ENCODE measurements at regions of chr15 and their contacts with region 1.

Region 1: GRCh38 chr15:78241007-78241406 is 6.6 kb upstream of the ACSBG1 start:
- DNase-seq: peak; percentile 75 to 87
- ATAC-seq: peak; percentile 83 to 97 (median 95)
- H3K4me3 ChIP-seq: no peak overlapping the region
- H3K4me3 Mint-ChIP-seq: no peak overlapping the region
- H3K27ac ChIP-seq: no peak overlapping the region
- H3K27ac Mint-ChIP-seq: no peak overlapping the region
- H3K4me1 ChIP-seq: no peaks in the 10 kb centered on the region
- H3K4me1 Mint-ChIP-seq: no peaks in the 10 kb centered on the region
- H3K27me3 ChIP-seq: no peaks in the 10 kb centered on the region
- H3K27me3 Mint-ChIP-seq: no peaks in the 10 kb centered on the region
- CTCF ChIP-seq: peak; percentile 80

Region 2: DNA sequence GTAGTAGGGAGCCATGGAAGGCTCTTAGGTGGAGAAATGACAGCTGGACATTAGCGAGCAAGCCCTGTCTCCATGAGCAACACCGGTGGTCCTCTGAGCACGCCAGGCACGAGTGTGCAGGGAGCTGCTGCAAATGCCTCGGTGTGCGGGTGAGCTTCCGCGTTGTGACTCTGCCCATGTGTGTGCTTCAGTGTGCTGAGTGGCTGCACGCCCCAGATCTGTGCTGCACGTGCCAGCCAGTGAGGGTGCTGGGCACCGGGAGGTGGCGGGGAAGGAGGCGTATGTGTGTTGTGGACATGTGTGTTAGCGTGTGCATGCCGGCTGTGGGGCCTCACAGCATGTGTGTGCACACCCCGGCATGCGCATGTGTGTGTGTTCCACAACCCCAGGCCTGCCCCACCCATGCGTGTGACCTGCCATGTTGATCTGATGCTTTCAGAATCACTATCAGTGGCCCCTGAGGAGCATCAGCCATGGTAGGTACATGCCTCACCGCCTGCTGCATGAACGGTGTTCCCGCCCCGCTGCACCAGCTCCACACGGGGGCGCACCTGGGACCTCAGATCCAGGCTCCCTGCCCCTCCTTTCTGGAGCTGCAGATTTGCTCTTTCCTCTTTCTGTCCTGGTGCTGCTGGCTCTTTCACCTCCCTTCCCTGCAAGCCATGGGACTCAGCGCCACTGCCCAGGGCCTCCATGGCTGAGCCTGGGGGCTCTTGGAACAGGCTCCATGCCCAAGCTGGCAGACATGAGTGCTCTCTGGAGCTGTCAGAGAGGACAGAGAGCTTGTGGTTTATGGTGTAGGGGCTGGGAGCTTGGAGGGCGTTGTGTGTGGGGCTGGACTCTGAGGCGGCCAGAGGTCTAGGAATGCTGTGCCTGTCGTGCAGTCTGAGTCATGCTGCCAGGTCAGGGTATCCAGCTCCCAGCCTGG is 332.9 kb before region 1 on chr15:
- intact Hi-C with region 1: loop called (anchors 1 kb)
- DNase-seq: peak in 1 of 2 donors; percentile 56
- ATAC-seq: peak in 1 of 3 donors; percentile 39
- H3K4me3 ChIP-seq: no peak overlapping the region
- H3K4me3 Mint-ChIP-seq: no peak overlapping the region
- H3K27ac ChIP-seq: no peak overlapping the region
- H3K27ac Mint-ChIP-seq: no peak overlapping the region
- H3K4me1 ChIP-seq: peaks cover under 1% of the 10 kb centered on the region
- H3K4me1 Mint-ChIP-seq: peaks cover 0 to 7% of the 10 kb centered on the region in 2 donors
- H3K27me3 ChIP-seq: no peaks in the 10 kb centered on the region
- H3K27me3 Mint-ChIP-seq: peaks cover 0 to 9% of the 10 kb centered on the region in 2 donors
- CTCF ChIP-seq: no peak

Region 3: GRCh38 chr15:78129077-78129750 is 111.8 kb before region 1 on chr15:
- intact Hi-C with region 1: loop called (anchors 5 kb)
- DNase-seq: peak in 1 of 2 donors; percentile 43
- ATAC-seq: no peak
- H3K4me3 ChIP-seq: no peak overlapping the region
- H3K4me3 Mint-ChIP-seq: no peak overlapping the region
- H3K27ac ChIP-seq: no peak overlapping the region
- H3K27ac Mint-ChIP-seq: peak overlapping the region; percentile 32 to 92
- H3K4me1 ChIP-seq: peaks cover 13% of the 10 kb centered on the region
- H3K4me1 Mint-ChIP-seq: peaks cover 5 to 24% of the 10 kb centered on the region in 2 donors
- H3K27me3 ChIP-seq: no peaks in the 10 kb centered on the region
- H3K27me3 Mint-ChIP-seq: no peaks in the 10 kb centered on the region
- CTCF ChIP-seq: no peak

Region 4: DNA sequence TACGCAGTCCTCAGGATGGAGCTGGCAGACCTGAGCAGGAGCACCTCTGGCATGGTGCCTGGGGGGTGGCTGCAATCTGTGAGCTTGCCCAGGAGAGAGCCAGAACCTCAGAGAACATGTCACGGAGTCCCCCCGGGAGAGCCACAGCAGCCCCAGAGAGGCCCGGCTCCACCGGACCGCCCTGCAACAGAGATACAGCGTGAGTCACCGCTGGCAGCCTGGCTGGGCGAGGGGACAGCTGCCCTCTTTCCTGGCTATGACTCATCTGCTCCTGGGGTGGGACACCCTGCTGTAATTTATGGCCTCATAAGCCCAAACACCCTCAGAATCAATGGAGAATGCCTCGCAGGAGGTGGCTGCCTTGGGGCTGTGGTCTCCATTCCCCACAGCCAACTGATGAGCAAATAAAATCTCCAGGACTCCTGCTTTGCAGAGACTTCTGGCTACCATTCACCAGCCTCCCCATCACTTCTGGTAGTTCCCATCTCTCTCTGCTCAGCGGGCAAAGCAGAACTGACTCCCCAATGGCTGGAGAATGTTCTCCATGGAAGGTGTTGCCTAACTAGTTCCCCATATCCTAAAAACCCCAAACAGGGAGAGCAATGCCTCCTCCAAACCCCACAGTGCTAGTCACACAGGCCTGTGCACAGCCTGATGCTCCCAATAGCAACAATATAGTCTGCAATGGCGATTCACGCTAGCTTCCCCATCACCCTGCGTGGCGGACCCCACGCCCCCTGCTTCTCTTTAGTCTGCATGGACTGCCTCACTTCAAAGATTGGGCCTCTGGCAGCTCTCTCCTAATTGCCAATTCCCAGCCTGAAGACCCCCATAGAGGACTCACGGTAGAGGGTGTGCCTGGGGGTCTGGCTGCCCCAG is 28.2 kb before region 1 on chr15:
- intact Hi-C with region 1: no loop called
- DNase-seq: no peak
- ATAC-seq: no peak
- H3K4me3 ChIP-seq: no peak overlapping the region
- H3K4me3 Mint-ChIP-seq: no peak overlapping the region
- H3K27ac ChIP-seq: no peak overlapping the region
- H3K27ac Mint-ChIP-seq: no peak overlapping the region
- H3K4me1 ChIP-seq: no peaks in the 10 kb centered on the region
- H3K4me1 Mint-ChIP-seq: no peaks in the 10 kb centered on the region
- H3K27me3 ChIP-seq: no peaks in the 10 kb centered on the region
- H3K27me3 Mint-ChIP-seq: peaks cover 3 to 12% of the 10 kb centered on the region in 2 donors
- CTCF ChIP-seq: no peak

Measured in natural killer cell (primary cell).